HepG2 (cell line): ENCODE measurements at regions of chr18 and their contacts with region 1.

Region 1: DNA sequence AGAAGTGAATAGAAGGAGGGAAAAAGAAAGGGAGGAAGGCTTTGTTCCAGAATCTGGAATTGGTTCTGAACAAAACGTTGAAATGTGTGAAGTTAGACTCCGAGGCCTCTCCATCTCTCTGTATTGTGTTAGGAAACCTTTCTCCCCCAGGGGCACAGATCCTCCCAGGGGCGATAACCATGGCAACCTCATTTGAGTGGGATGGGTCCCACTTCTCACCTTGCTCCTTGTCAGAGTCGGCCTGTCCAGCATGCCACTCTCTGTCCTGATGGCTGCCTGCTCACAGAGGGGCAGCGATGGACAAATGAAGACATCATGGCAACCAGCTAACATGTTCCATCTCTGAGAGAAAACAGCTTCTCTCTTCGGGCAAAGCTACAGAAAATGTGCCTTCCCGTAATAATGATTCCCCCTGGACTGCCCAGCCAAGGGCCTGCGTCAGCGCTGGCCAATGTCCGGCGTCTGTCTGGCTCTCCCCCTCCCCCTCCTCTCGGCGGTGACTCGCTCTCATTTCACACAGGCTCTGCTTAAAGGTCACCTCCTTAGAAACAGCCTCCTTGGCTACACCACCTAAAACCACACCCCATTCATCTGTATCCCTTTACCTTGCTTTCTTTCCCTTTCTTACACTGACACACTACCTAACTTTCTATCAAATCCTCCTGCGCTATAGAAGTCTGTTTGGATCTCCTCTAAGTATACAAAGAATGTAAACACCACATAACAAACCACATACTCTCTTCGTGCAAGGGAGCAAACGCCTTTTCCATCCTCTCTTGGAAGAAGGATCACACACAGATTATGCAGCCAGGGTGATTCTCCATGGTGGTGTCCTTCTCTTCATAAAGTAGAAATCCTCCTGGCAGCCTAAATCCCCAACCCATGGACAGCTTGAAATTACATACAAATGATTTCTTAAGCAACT is 32.1 kb upstream of the TTC39C start:
- DNase-seq: no peak
- ATAC-seq: peak; percentile 85
- H3K4me3 ChIP-seq: peak overlapping the region; percentile 25 to 65 (median 37); a peak in 4 of 6 replicates
- H3K27ac ChIP-seq: no peak overlapping the region
- H3K4me1 ChIP-seq: peaks cover 20% of the 10 kb centered on the region
- H3K27me3 ChIP-seq: peaks cover 0 to 7% of the 10 kb centered on the region in 2 experiments; a peak in 2 of 5 replicates
- CTCF ChIP-seq: no peak
- EP300 ChIP-seq: no peak
- POLR2A ChIP-seq: no peak
- RAD21 ChIP-seq: no peak

Region 2: DNA sequence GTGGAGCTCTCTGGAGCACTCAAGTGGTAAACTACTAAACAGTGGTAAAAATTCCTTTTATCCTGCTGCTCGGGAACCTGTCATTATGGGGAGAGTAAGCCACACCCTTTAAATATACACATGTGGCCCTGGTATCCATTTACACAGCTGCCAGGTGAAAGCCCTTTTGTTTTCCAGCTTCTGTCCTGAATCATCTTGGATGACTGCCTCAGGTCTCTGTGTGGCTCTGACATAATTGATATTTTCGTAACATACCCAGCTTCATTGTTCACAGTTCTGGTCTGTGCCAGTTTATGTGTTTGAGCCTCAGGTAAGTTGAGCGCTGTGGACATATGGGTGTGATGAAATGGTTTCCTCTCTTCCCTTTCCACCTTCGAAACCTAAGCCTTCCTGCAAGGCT is 16.4 kb after region 1 on chr18:
- CTCF ChIA-PET with region 1: no interaction called
- POLR2A ChIA-PET with region 1: no interaction called
- in situ Hi-C with region 1: no loop called
- intact Hi-C with region 1: loop called (anchors 2 kb)
- DNase-seq: peak; percentile 68
- ATAC-seq: peak; percentile 55; the same call in 2 of the 3 replicates
- H3K4me3 ChIP-seq: no peak overlapping the region
- H3K27ac ChIP-seq: no peak overlapping the region
- H3K4me1 ChIP-seq: peaks cover 26% of the 10 kb centered on the region
- H3K27me3 ChIP-seq: no peaks in the 10 kb centered on the region; a peak in 1 of 5 replicates
- CTCF ChIP-seq: no peak
- EP300 ChIP-seq: no peak
- POLR2A ChIP-seq: no peak
- RAD21 ChIP-seq: no peak